PC-3 (cell line): ENCODE measurements at regions of chr17 and their contacts with region 1.

Region 1: DNA sequence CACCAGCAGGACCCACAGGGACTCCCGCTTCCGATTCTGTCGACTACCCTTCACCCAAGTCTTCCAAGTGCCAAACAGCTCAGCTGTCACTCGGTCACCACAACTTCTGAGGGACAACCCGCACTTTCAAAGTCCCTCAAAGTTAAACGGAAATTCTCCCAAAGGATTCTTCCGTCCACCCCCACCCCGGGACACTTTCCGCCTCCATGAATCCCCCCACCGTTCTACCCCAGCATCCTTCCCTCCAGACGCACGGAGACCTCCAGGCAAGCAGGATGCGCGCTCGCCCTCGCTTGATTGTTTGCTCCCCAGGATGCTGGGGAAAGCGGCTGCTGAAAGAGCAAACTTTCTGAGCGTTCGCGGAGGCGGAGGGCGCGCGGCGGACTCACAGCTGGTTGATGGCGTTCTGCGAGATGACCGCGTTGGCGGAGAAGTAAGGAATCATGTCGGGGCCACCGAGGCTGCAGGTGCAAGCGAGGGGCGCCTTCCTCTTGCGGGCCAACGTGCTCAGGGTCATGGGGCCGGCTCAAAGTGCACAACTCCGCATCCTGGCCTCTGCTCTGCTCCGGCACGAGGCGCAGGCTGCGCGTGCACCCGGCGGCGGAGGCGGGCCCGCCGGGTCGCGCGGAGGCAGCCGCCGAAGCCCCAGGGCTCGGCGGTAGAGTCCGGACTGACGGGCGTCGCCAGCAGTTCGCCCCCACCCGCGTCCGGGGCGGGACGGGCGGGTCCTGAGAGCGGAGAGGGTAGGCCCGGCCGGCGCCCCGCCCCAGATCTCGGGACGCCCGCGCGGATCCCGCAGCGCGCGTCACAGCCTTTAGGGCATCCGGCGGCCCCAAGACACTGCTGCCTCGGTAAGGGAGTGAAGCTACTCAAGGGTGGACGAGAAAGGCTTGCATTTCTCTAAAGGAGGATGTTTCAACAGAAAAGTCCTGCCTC is 138.3 kb upstream of the CORO6 start:
- DNase-seq: peak; percentile 87
- ATAC-seq: peak; percentile 98
- H3K4me3 ChIP-seq: peak overlapping the region; percentile 93
- H3K27ac ChIP-seq: peak overlapping the region; percentile 46
- H3K4me1 ChIP-seq: peaks cover 5% of the 10 kb centered on the region; the same call in 1 of the 2 replicates
- H3K27me3 ChIP-seq: no peaks in the 10 kb centered on the region
- CTCF ChIP-seq: no peak

Region 2: GRCh38 chr17:29683481-29683880 is 77.5 kb before region 1 on chr17:
- CTCF ChIA-PET with region 1: no interaction called
- POLR2A ChIA-PET with region 1: interaction called, 12 read pairs
- intact Hi-C with region 1: no loop called
- DNase-seq: no peak
- ATAC-seq: no peak
- H3K4me3 ChIP-seq: no peak overlapping the region
- H3K27ac ChIP-seq: no peak overlapping the region
- H3K4me1 ChIP-seq: no peaks in the 10 kb centered on the region
- H3K27me3 ChIP-seq: no peaks in the 10 kb centered on the region
- CTCF ChIP-seq: no peak